ENCODE measurements at regions of chr11 and their contacts with region 1.

Region 1: DNA sequence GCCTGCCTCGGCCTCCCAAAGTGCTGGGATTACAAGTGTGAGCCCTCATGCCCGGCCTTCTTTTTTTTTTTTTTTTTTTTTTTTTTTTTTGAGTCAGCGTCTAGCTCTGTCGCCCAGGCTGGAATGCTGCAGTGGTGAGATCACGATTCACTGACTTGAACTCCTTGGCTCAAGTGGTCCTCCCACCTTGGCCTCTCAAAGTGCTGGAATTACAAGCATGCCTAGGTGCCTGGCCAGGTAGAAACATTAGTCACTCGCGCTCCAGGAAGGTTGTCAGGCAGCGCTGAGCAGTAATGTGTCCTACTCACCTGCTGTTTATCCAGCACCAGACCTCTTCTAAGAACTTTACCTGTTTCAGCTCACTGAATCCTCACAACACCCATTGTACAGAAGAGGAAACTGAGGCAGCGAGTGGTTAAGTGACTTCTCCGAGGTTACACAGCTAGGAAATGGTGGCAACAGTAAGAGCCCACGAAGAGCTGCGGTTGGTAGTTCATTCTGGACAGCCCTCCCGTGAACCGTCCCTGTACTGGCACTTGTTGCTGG is 496 bp upstream of the CST6 start:
- DNase-seq: no peak
- H3K4me3 ChIP-seq: no peak overlapping the region
- H3K4me3 Mint-ChIP-seq: no peak overlapping the region
- H3K27ac ChIP-seq: no peak overlapping the region
- H3K27ac Mint-ChIP-seq: no peak overlapping the region
- H3K4me1 ChIP-seq: no peaks in the 10 kb centered on the region
- H3K4me1 Mint-ChIP-seq: peaks cover 0 to 5% (median 3%) of the 10 kb centered on the region in 4 donors
- H3K27me3 ChIP-seq: peaks cover 13% of the 10 kb centered on the region
- H3K27me3 Mint-ChIP-seq: peaks cover 9 to 14% of the 10 kb centered on the region in 2 donors

Region 2: GRCh38 chr11:66045177-66045639 is 33.9 kb after region 1 on chr11:
- CTCF ChIA-PET with region 1: interaction called, 10 read pairs
- POLR2A ChIA-PET with region 1: no interaction called
- intact Hi-C with region 1: no loop called
- DNase-seq: peak; percentile 78 to 86 (median 81)
- H3K4me3 ChIP-seq: no peak overlapping the region
- H3K4me3 Mint-ChIP-seq: peak overlapping the region in 2 of 8 donors; percentile 32 to 55
- H3K27ac ChIP-seq: no peak overlapping the region
- H3K27ac Mint-ChIP-seq: peak overlapping the region in 2 of 7 donors; percentile 9 to 67
- H3K4me1 ChIP-seq: peaks cover 12% of the 10 kb centered on the region
- H3K4me1 Mint-ChIP-seq: peaks cover 5 to 16% (median 9%) of the 10 kb centered on the region in 4 donors
- H3K27me3 ChIP-seq: no peaks in the 10 kb centered on the region
- H3K27me3 Mint-ChIP-seq: peaks cover 0 to 2% of the 10 kb centered on the region in 2 donors